CD8-positive, alpha-beta T cell (primary cell): ENCODE measurements at regions of chr1 and their contacts with region 1.

Region 1: DNA sequence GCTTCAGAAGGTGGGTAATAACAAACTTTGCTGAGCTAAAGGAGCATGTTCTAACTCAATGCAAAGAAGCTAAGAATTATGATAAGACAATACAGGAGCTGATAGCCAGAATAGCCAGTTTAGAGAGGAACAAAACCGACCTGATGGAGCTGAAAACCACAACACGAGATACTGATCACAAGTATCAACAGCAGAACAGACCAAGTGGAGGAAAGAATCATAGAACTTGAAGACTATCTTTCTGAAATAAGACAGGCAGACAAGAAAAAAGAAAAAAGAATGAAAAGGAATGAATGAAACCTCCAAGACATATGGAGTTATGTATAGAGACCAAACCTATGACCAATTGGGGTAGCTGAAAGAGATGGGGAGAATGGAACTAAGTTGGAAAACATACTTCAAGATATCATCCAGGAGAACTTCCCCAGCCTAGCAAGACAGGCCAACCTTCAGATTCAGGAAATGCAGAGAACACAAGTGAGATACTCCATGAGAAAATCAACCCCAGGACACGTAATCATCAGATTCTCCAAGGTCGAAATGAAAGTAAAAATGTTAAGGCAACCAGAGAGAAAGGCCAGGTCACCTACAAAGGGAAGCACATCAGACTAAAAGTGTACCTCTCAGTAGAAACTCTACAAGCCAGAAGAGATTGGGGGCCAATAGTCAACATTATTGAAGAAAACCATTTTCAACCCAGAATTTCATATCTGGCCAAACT is 20.5 kb downstream of the CD84 start:
- DNase-seq: peak in 3 of 9 experiments; percentile 35 to 70 (median 38)
- ATAC-seq: peak; percentile 22
- H3K4me3 ChIP-seq: peak overlapping the region in 1 of 2 experiments; percentile 31
- H3K4me3 Mint-ChIP-seq: peak overlapping the region; percentile 79
- H3K27ac ChIP-seq: peak overlapping the region; percentile 14 to 84
- H3K27ac Mint-ChIP-seq: peak overlapping the region; percentile 95
- H3K4me1 ChIP-seq: peaks cover 46% of the 10 kb centered on the region
- H3K4me1 Mint-ChIP-seq: peaks cover 80% of the 10 kb centered on the region
- H3K27me3 ChIP-seq: no peaks in the 10 kb centered on the region
- H3K27me3 Mint-ChIP-seq: no peaks in the 10 kb centered on the region
- CTCF ChIP-seq: no peak

Region 2: GRCh38 chr1:160342953-160343869 is 215.6 kb before region 1 on chr1 and contains the starts of genes COPA and NCSTN:
- CTCF ChIA-PET with region 1: no interaction called
- POLR2A ChIA-PET with region 1: no interaction called
- intact Hi-C with region 1: no loop called
- DNase-seq: peak; percentile 82 to 97 (median 89)
- ATAC-seq: peak; percentile 98
- H3K4me3 ChIP-seq: peak within 1 kb of the TSS; percentile 78 to 98
- H3K4me3 Mint-ChIP-seq: peak within 1 kb of the TSS; percentile 100
- H3K27ac ChIP-seq: peak within 1 kb of the TSS; percentile 88 to 97
- H3K27ac Mint-ChIP-seq: peak within 1 kb of the TSS; percentile 100
- H3K4me1 ChIP-seq: peaks cover 12% of the 10 kb centered on the region
- H3K4me1 Mint-ChIP-seq: peaks cover 72% of the 10 kb centered on the region
- H3K27me3 ChIP-seq: no peaks in the 10 kb centered on the region
- H3K27me3 Mint-ChIP-seq: no peaks in the 10 kb centered on the region
- CTCF ChIP-seq: no peak
- total RNA-seq, gene COPA: 116 to 126 TPM
- total RNA-seq, gene NCSTN: 55.6 to 58.4 TPM

Region 3: GRCh38 chr1:160575112-160575664 is 16.4 kb after region 1 on chr1:
- CTCF ChIA-PET with region 1: interaction called, 11 read pairs
- POLR2A ChIA-PET with region 1: interaction called, 10 read pairs
- intact Hi-C with region 1: loop called in 1 of 2 experiments (anchors 2 kb)
- DNase-seq: peak in 2 of 9 experiments; percentile 31 to 52
- ATAC-seq: no peak
- H3K4me3 ChIP-seq: peak overlapping the region; percentile 20 to 50
- H3K4me3 Mint-ChIP-seq: peak overlapping the region; percentile 92
- H3K27ac ChIP-seq: peak overlapping the region; percentile 8 to 72
- H3K27ac Mint-ChIP-seq: peak overlapping the region; percentile 91
- H3K4me1 ChIP-seq: peaks cover 83% of the 10 kb centered on the region
- H3K4me1 Mint-ChIP-seq: peaks cover 85% of the 10 kb centered on the region
- H3K27me3 ChIP-seq: no peaks in the 10 kb centered on the region
- H3K27me3 Mint-ChIP-seq: no peaks in the 10 kb centered on the region
- CTCF ChIP-seq: no peak